ENCODE measurements at regions of chr3 and their contacts with region 1.

Region 1: DNA sequence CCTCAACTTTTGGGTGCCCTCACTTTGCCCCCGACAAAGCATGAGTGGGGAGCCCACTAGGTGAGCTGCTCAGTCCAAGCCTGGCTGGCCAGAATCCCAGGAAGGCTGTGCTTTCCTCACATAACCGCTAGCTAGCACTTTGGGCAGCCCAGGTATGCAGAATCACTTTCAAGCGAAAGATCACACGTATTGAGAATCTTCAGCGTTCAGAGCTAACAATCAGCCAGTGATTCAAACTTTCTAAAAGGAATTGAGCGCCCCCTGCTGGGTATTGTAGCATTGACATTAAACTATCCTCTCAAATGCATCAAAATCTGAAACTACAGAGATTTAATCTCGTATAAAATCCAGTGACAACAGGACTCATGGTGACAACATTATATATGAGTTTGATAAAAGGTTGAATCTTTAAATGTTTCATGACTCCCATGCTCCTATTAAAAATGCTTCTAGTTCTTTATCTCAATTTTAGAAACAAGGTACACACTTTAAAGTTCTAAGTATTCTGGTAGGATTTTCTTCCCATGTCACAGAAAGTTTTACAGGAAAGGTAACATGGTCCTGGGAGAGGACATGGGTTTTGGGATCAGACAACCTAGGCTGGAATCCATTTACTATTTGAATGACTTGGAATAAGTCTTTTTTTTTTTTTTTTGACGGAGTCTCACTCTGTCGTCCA is 11.8 kb downstream of the ANAPC13 start:
- DNase-seq: peak; percentile 84
- H3K4me3 ChIP-seq: no peak overlapping the region
- H3K27ac ChIP-seq: no peak overlapping the region
- H3K27me3 ChIP-seq: no peaks in the 10 kb centered on the region
- CTCF ChIP-seq: peak; percentile 66

Region 2: DNA sequence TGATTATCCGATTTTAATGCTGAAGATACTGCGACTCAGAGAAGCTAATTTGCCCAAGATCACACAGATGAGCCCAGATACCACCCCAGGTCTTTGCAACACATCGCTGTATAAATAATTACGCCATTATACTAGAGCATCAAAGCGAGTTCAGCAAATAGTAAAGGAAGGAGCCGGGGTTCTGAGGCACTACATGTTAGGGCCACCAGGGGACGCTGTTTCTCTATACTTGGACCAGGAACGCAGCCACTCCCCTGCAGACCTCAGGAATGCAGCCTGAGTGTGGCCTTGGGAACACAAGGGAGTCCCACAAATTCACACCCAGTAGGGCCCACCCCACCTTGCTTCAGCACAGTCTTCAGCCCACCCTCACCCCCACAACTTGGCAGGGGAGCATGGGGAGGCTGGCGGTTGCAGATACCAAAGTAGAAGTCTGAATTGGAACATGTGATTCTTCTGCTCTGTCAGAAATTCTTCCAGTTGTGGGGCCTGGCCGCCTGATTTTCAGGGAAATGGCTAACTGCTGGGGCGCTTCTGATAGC is 165.6 kb before region 1 on chr3:
- in situ Hi-C with region 1: loop called (anchors 10 kb)
- DNase-seq: peak; percentile 84
- H3K4me3 ChIP-seq: peak overlapping the region; percentile 26
- H3K27ac ChIP-seq: peak overlapping the region; percentile 42
- H3K27me3 ChIP-seq: no peaks in the 10 kb centered on the region
- CTCF ChIP-seq: peak; percentile 99

Region 3: GRCh38 chr3:135565546-135565945 is 1091.5 kb after region 1 on chr3:
- in situ Hi-C with region 1: no loop called
- DNase-seq: no peak
- H3K4me3 ChIP-seq: no peak overlapping the region
- H3K27ac ChIP-seq: no peak overlapping the region
- H3K27me3 ChIP-seq: no peaks in the 10 kb centered on the region
- CTCF ChIP-seq: no peak